ENCODE measurements at regions of chr20 and their contacts with region 1.

Region 1: GRCh38 chr20:34363062-34363464 is at the start of gene ITCH:
- DNase-seq: peak; percentile 88
- ATAC-seq: peak; percentile 96
- H3K4me3 Mint-ChIP-seq: peak within 1 kb of the TSS; percentile 100
- H3K27ac Mint-ChIP-seq: peak within 1 kb of the TSS; percentile 99
- H3K4me1 Mint-ChIP-seq: peaks cover 41% of the 10 kb centered on the region
- H3K27me3 Mint-ChIP-seq: peaks cover 1% of the 10 kb centered on the region
- CTCF ChIP-seq: no peak
- total RNA-seq, gene ITCH: 62.6 and 66.3 TPM in 2 replicates

Region 2: DNA sequence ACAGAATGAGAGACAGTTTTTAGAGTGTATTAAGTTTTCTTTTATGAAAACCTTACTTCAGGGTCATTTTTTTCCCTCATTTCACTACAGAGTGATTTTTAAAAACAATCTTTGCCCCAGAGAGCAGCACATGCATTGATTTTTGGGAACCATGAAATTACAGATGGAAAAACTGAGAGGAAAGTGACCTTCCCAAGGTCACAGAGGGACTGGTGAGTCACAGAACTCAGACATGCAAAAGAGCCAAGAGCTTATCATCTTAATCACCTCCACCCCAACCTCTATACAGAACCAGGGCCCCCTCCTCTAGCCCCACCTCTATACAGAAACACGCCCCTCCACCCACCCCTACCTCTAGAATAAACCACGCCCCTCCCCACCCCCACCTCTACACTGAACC is 653.7 kb before region 1 on chr20:
- CTCF ChIA-PET with region 1: no interaction called
- POLR2A ChIA-PET with region 1: no interaction called
- intact Hi-C with region 1: no loop called
- DNase-seq: no peak
- ATAC-seq: no peak
- H3K4me3 Mint-ChIP-seq: no peak overlapping the region
- H3K27ac Mint-ChIP-seq: no peak overlapping the region
- H3K4me1 Mint-ChIP-seq: peaks cover 2% of the 10 kb centered on the region
- H3K27me3 Mint-ChIP-seq: no peaks in the 10 kb centered on the region
- CTCF ChIP-seq: no peak

Region 3: GRCh38 chr20:34302723-34303528 is 60.1 kb before region 1 on chr20 and contains the start of gene AHCY:
- CTCF ChIA-PET with region 1: no interaction called
- POLR2A ChIA-PET with region 1: interaction called, 17 read pairs
- intact Hi-C with region 1: loop called (anchors 1 kb)
- DNase-seq: peak; percentile 90
- ATAC-seq: peak; percentile 91
- H3K4me3 Mint-ChIP-seq: peak within 1 kb of the TSS; percentile 94
- H3K27ac Mint-ChIP-seq: peak within 1 kb of the TSS; percentile 93
- H3K4me1 Mint-ChIP-seq: peaks cover 22% of the 10 kb centered on the region
- H3K27me3 Mint-ChIP-seq: no peaks in the 10 kb centered on the region
- CTCF ChIP-seq: no peak
- total RNA-seq, gene AHCY: 77.9 and 83.5 TPM in 2 replicates

Region 4: GRCh38 chr20:34377072-34377847 is 14.2 kb after region 1 on chr20:
- CTCF ChIA-PET with region 1: no interaction called
- POLR2A ChIA-PET with region 1: interaction called, 6 read pairs
- intact Hi-C with region 1: loop called (anchors 2 kb)
- DNase-seq: no peak
- ATAC-seq: peak; percentile 71
- H3K4me3 Mint-ChIP-seq: peak overlapping the region; percentile 21
- H3K27ac Mint-ChIP-seq: peak overlapping the region; percentile 50
- H3K4me1 Mint-ChIP-seq: peaks cover 22% of the 10 kb centered on the region
- H3K27me3 Mint-ChIP-seq: no peaks in the 10 kb centered on the region
- CTCF ChIP-seq: no peak

Region 5: DNA sequence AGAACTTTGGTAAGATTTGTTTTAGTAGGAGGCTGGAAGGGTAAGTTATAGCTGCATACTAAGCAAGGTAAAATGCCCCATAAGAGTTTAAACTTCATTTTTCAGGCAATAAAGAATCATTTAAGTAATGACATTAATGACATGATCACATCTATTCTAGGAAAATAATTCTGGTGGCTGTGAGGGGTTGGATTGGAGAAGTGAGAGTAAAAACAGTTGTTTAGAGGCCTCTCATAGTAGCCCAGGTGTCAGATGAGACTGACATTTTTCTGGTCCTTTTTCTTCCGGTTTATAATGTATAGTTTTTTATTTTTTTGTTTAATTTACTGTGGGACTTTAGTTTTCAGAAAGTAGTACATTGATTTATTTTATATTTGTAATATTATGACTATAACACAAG is 40.8 kb after region 1 on chr20:
- CTCF ChIA-PET with region 1: no interaction called
- POLR2A ChIA-PET with region 1: interaction called, 4 read pairs
- intact Hi-C with region 1: loop called (anchors 2 kb)
- DNase-seq: no peak
- ATAC-seq: peak; percentile 60
- H3K4me3 Mint-ChIP-seq: peak overlapping the region; percentile 24
- H3K27ac Mint-ChIP-seq: peak overlapping the region; percentile 68
- H3K4me1 Mint-ChIP-seq: peaks cover 53% of the 10 kb centered on the region
- H3K27me3 Mint-ChIP-seq: no peaks in the 10 kb centered on the region
- CTCF ChIP-seq: no peak

Region 6: GRCh38 chr20:34516247-34517113 is 153.4 kb after region 1 on chr20 and contains the start of gene DYNLRB1:
- CTCF ChIA-PET with region 1: no interaction called
- POLR2A ChIA-PET with region 1: interaction called, 16 read pairs
- intact Hi-C with region 1: loop called (anchors 1 kb)
- DNase-seq: peak; percentile 88
- ATAC-seq: peak; percentile 82
- H3K4me3 Mint-ChIP-seq: peak within 1 kb of the TSS; percentile 98
- H3K27ac Mint-ChIP-seq: peak within 1 kb of the TSS; percentile 96
- H3K4me1 Mint-ChIP-seq: peaks cover 48% of the 10 kb centered on the region
- H3K27me3 Mint-ChIP-seq: no peaks in the 10 kb centered on the region
- CTCF ChIP-seq: no peak
- total RNA-seq, gene DYNLRB1: 62.7 and 65.9 TPM in 2 replicates

Region 7: GRCh38 chr20:34676642-34677373 is 313.7 kb after region 1 on chr20 and contains the start of gene PIGU:
- CTCF ChIA-PET with region 1: no interaction called
- POLR2A ChIA-PET with region 1: interaction called, 6 read pairs
- intact Hi-C with region 1: loop called (anchors 1 kb)
- DNase-seq: peak; percentile 91
- ATAC-seq: peak; percentile 94
- H3K4me3 Mint-ChIP-seq: peak within 1 kb of the TSS; percentile 98
- H3K27ac Mint-ChIP-seq: peak within 1 kb of the TSS; percentile 95
- H3K4me1 Mint-ChIP-seq: peaks cover 15% of the 10 kb centered on the region
- H3K27me3 Mint-ChIP-seq: no peaks in the 10 kb centered on the region
- CTCF ChIP-seq: no peak
- total RNA-seq, gene PIGU: 14.7 and 15.3 TPM in 2 replicates

Region 8: GRCh38 chr20:34825530-34826362 is 462.7 kb after region 1 on chr20 and contains the start of gene NCOA6:
- CTCF ChIA-PET with region 1: no interaction called
- POLR2A ChIA-PET with region 1: interaction called, 5 read pairs
- intact Hi-C with region 1: loop called (anchors 10 kb)
- DNase-seq: peak; percentile 78
- ATAC-seq: peak; percentile 74
- H3K4me3 Mint-ChIP-seq: peak within 1 kb of the TSS; percentile 97
- H3K27ac Mint-ChIP-seq: peak within 1 kb of the TSS; percentile 90
- H3K4me1 Mint-ChIP-seq: peaks cover 41% of the 10 kb centered on the region
- H3K27me3 Mint-ChIP-seq: no peaks in the 10 kb centered on the region
- CTCF ChIP-seq: no peak
- total RNA-seq, gene NCOA6: 23.7 and 24.0 TPM in 2 replicates

Measured in activated B cell treated with CpG ODN at 0.5 μM for 24 hours (primary cell).